ENCODE measurements at regions of chr16 and their contacts with region 1.

Region 1: DNA sequence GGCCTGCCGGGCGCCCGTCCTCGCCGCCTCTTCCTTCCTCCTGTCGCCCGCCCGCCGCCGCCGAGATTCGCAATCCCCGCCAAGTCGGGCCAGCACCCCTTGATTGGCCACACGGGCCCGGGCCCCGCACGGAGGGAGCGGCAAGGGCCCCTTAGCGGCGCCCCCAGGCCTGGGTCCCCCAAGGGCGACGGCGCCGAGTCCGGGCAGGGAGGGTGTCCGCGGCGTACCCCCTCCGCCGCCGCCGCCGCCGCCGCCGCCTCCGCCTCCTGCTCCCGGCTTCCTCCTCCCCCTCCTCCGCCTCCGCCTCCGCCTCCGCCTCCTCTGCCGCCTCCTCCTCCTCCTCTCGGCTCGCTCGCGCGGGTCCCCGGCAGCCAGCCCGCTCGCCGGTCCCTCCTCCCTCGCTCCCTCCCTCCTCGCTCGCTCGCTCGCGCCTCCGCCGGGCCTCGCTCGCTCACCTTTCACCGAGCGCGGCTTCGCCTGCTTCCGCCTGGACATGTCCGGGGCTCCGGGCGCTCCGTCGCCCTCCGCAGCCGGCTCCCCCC is 561 bp downstream of the ZNF423 start:
- DNase-seq: peak; percentile 33
- H3K4me3 Mint-ChIP-seq: peak overlapping the region; percentile 69
- H3K27ac Mint-ChIP-seq: no peak overlapping the region
- H3K4me1 Mint-ChIP-seq: peaks cover 4% of the 10 kb centered on the region
- H3K27me3 Mint-ChIP-seq: peaks cover 71% of the 10 kb centered on the region
- CTCF ChIP-seq: no peak

Region 2: GRCh38 chr16:49407873-49408550 is 447.3 kb before region 1 on chr16:
- CTCF ChIA-PET with region 1: interaction called, 4 read pairs
- POLR2A ChIA-PET with region 1: no interaction called
- intact Hi-C with region 1: loop called (anchors 1 kb)
- DNase-seq: peak; percentile 79
- H3K4me3 Mint-ChIP-seq: no peak overlapping the region
- H3K27ac Mint-ChIP-seq: no peak overlapping the region
- H3K4me1 Mint-ChIP-seq: no peaks in the 10 kb centered on the region
- H3K27me3 Mint-ChIP-seq: no peaks in the 10 kb centered on the region
- CTCF ChIP-seq: peak; percentile 91

Region 3: DNA sequence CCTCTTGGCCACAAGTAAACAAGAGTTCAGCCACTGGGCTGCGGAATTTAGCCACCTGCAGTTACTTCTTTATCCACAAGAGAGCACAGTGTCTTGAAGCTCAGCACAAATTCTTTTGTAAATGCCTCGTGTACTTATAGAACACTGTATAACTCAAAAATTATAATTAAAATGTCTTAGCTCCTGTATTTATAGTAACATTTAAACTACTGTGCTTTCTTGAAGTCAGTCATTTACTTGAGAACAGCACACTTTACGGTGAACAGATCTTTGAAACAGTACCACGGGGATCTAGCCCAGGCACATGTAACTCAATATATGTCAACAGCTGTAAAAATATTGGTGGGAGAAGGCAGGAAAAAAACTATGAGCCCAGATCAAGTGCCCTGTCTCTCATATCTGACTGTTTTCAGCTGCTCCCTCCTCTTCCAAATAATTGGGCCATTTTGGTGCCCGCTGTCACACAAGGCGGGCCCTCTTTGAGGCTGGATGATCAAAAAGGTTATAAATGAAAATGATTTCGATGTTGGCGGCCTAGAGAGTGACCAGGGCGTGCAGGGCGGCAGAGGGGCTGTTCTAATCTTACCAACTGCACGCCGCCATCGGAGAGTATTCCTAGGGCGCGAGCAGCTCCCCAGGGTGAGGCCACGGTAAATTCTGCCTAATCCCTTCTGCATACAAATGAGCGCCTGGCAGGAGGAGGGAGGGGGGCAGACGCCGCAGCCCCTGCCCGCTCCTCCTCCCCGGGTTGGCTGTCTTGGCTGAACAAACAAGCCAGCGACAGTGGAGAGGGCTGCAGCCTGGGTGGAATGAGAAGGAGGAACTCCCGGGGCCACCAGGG is 298.5 kb before region 1 on chr16:
- CTCF ChIA-PET with region 1: interaction called, 10 read pairs
- POLR2A ChIA-PET with region 1: no interaction called
- intact Hi-C with region 1: no loop called
- DNase-seq: no peak
- H3K4me3 Mint-ChIP-seq: no peak overlapping the region
- H3K27ac Mint-ChIP-seq: no peak overlapping the region
- H3K4me1 Mint-ChIP-seq: no peaks in the 10 kb centered on the region
- H3K27me3 Mint-ChIP-seq: peaks cover 17% of the 10 kb centered on the region
- CTCF ChIP-seq: peak; percentile 35

Region 4: DNA sequence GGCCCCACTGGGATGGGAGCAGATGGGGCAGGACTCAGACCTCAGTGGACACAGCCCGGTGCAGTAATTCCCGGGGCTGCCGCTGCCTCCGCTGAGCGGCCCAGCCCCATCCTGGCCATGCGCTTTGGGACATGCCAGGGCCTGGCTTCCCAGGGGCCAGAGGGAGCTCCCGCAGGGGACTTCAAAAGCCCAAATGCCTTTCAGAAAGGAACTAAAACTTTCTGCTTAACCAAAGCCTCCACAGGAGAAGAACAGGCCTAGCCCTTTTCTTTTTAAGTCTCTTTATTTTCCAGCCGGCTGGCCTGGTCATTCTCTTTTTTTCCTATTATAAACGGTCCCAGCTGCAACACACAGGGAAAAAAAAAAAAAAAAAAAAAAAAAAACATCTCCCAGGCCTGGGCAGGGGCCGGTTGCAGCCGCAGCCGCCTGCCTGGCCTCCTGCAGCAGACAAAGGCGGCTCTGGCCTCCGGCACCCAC is 11.3 kb after region 1 on chr16:
- CTCF ChIA-PET with region 1: interaction called, 14 read pairs
- POLR2A ChIA-PET with region 1: no interaction called
- intact Hi-C with region 1: no loop called
- DNase-seq: no peak
- H3K4me3 Mint-ChIP-seq: no peak overlapping the region
- H3K27ac Mint-ChIP-seq: no peak overlapping the region
- H3K4me1 Mint-ChIP-seq: no peaks in the 10 kb centered on the region
- H3K27me3 Mint-ChIP-seq: peaks cover 55% of the 10 kb centered on the region
- CTCF ChIP-seq: no peak

Region 5: GRCh38 chr16:49921791-49922456 is 66.6 kb after region 1 on chr16:
- CTCF ChIA-PET with region 1: interaction called, 26 read pairs
- POLR2A ChIA-PET with region 1: no interaction called
- intact Hi-C with region 1: loop called (anchors 1 kb)
- DNase-seq: peak; percentile 60
- H3K4me3 Mint-ChIP-seq: no peak overlapping the region
- H3K27ac Mint-ChIP-seq: no peak overlapping the region
- H3K4me1 Mint-ChIP-seq: no peaks in the 10 kb centered on the region
- H3K27me3 Mint-ChIP-seq: peaks cover 21% of the 10 kb centered on the region
- CTCF ChIP-seq: peak; percentile 67

Measured in MCF 10A (cell line).